ENCODE measurements at regions of chr10 and their contacts with region 1.

Region 1: GRCh38 chr10:101782811-101783735 is at the start of gene NPM3:
- DNase-seq: peak; percentile 59
- ATAC-seq: peak; percentile 74
- H3K4me3 ChIP-seq: peak within 1 kb of the TSS; percentile 74 to 90
- H3K27ac ChIP-seq: peak within 1 kb of the TSS; percentile 66
- H3K4me1 ChIP-seq: peaks cover 19 to 45% of the 10 kb centered on the region in 2 experiments
- H3K27me3 ChIP-seq: no peaks in the 10 kb centered on the region
- CTCF ChIP-seq: no peak
- POLR2A ChIP-seq: peak; percentile 65
- RAD21 ChIP-seq: no peak
- total RNA-seq, gene NPM3: 267 TPM

Region 2: GRCh38 chr10:101161494-101162299 is 621.4 kb before region 1 on chr10:
- CTCF ChIA-PET with region 1: interaction called, 5 read pairs
- POLR2A ChIA-PET with region 1: no interaction called
- RAD21 ChIA-PET with region 1: no interaction called
- intact Hi-C with region 1: loop called (anchors 1 kb)
- DNase-seq: peak; percentile 72
- ATAC-seq: peak; percentile 95
- H3K4me3 ChIP-seq: peak overlapping the region; percentile 38 to 47
- H3K27ac ChIP-seq: no peak overlapping the region
- H3K4me1 ChIP-seq: peaks cover 4 to 15% of the 10 kb centered on the region in 2 experiments; a peak in 3 of 4 replicates
- H3K27me3 ChIP-seq: no peaks in the 10 kb centered on the region
- CTCF ChIP-seq: peak; percentile 95 to 100 (median 99)
- POLR2A ChIP-seq: no peak
- RAD21 ChIP-seq: peak; percentile 99

Region 3: GRCh38 chr10:101458869-101459268 is 324.2 kb before region 1 on chr10:
- CTCF ChIA-PET with region 1: no interaction called
- POLR2A ChIA-PET with region 1: no interaction called
- RAD21 ChIA-PET with region 1: no interaction called
- intact Hi-C with region 1: no loop called
- DNase-seq: no peak
- ATAC-seq: no peak
- H3K4me3 ChIP-seq: no peak overlapping the region
- H3K27ac ChIP-seq: no peak overlapping the region
- H3K4me1 ChIP-seq: no peaks in the 10 kb centered on the region
- H3K27me3 ChIP-seq: no peaks in the 10 kb centered on the region
- CTCF ChIP-seq: no peak
- POLR2A ChIP-seq: no peak
- RAD21 ChIP-seq: no peak

Region 4: GRCh38 chr10:101587725-101588653 is 195.1 kb before region 1 on chr10 and contains the starts of genes DPCD and POLL:
- CTCF ChIA-PET with region 1: interaction called, 3 read pairs
- POLR2A ChIA-PET with region 1: no interaction called
- RAD21 ChIA-PET with region 1: no interaction called
- intact Hi-C with region 1: loop called (anchors 5 kb)
- DNase-seq: peak; percentile 91
- ATAC-seq: peak; percentile 92
- H3K4me3 ChIP-seq: peak within 1 kb of the TSS; percentile 89 to 94
- H3K27ac ChIP-seq: peak within 1 kb of the TSS; percentile 63
- H3K4me1 ChIP-seq: peaks cover 10 to 16% of the 10 kb centered on the region in 2 experiments; a peak in 3 of 4 replicates
- H3K27me3 ChIP-seq: no peaks in the 10 kb centered on the region
- CTCF ChIP-seq: no peak
- POLR2A ChIP-seq: peak; percentile 75
- RAD21 ChIP-seq: no peak
- total RNA-seq, gene DPCD: 39.5 TPM
- total RNA-seq, gene POLL: 51.3 TPM

Region 5: GRCh38 chr10:101602761-101603398 is 180.2 kb before region 1 on chr10:
- CTCF ChIA-PET with region 1: interaction called, 220 read pairs
- POLR2A ChIA-PET with region 1: interaction called, 10 read pairs
- RAD21 ChIA-PET with region 1: interaction called, 15 to 21 read pairs
- intact Hi-C with region 1: loop called (anchors 1 kb)
- DNase-seq: peak; percentile 71
- ATAC-seq: peak; percentile 99
- H3K4me3 ChIP-seq: no peak overlapping the region
- H3K27ac ChIP-seq: no peak overlapping the region
- H3K4me1 ChIP-seq: no peaks in the 10 kb centered on the region
- H3K27me3 ChIP-seq: no peaks in the 10 kb centered on the region
- CTCF ChIP-seq: peak; percentile 97 to 99 (median 99)
- POLR2A ChIP-seq: no peak
- RAD21 ChIP-seq: peak; percentile 96

Region 6: DNA sequence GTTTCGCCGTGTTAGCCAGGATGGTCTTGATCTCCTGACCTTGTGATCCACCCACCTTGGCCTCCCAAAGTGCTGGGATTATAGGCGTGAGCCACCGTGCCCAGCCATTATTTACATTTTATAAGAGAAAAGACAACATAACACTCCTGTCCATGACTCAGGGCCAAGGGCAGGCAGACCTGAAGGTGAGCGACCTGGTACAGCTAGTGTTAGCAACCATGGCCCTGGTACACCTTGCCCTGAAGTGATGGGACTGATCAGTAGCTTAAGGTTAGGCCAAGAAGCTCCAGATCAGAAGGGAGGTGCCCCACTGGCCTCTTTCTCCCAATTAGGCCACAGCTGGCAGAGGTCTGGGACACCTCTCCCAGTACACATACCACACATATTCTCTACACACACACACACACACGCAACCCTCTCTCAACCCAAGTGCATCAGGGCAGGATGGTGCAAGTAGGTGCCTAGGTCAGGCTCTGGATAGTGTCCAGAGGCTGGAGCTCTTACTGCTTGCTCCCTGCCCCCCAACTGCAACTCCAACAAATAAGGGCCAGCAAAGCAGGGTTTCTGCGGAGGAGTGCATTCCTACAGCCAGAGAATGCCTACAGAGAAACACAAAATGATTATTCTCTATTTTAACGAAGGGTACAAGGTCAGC is 151.1 kb before region 1 on chr10:
- CTCF ChIA-PET with region 1: no interaction called
- POLR2A ChIA-PET with region 1: no interaction called
- RAD21 ChIA-PET with region 1: no interaction called
- intact Hi-C with region 1: no loop called
- DNase-seq: no peak
- ATAC-seq: no peak
- H3K4me3 ChIP-seq: no peak overlapping the region
- H3K27ac ChIP-seq: no peak overlapping the region
- H3K4me1 ChIP-seq: no peaks in the 10 kb centered on the region
- H3K27me3 ChIP-seq: no peaks in the 10 kb centered on the region
- CTCF ChIP-seq: no peak
- POLR2A ChIP-seq: no peak
- RAD21 ChIP-seq: no peak

Region 7: GRCh38 chr10:101797403-101798059 is 14.5 kb after region 1 on chr10:
- CTCF ChIA-PET with region 1: interaction called, 17 read pairs
- POLR2A ChIA-PET with region 1: interaction called, 6 read pairs
- RAD21 ChIA-PET with region 1: no interaction called
- intact Hi-C with region 1: no loop called
- DNase-seq: no peak
- ATAC-seq: no peak
- H3K4me3 ChIP-seq: no peak overlapping the region
- H3K27ac ChIP-seq: no peak overlapping the region
- H3K4me1 ChIP-seq: no peaks in the 10 kb centered on the region
- H3K27me3 ChIP-seq: no peaks in the 10 kb centered on the region
- CTCF ChIP-seq: no peak
- POLR2A ChIP-seq: no peak
- RAD21 ChIP-seq: no peak

Region 8: GRCh38 chr10:101818119-101818871 is 35.2 kb after region 1 on chr10 and contains the start of gene OGA:
- CTCF ChIA-PET with region 1: interaction called, 7 read pairs
- POLR2A ChIA-PET with region 1: interaction called, 7 read pairs
- RAD21 ChIA-PET with region 1: interaction called in 1 of 2 experiments, 3 read pairs
- intact Hi-C with region 1: loop called (anchors 5 kb)
- DNase-seq: peak; percentile 100
- ATAC-seq: peak; percentile 91
- H3K4me3 ChIP-seq: peak within 1 kb of the TSS; percentile 87 to 96
- H3K27ac ChIP-seq: peak within 1 kb of the TSS; percentile 81
- H3K4me1 ChIP-seq: peaks cover 18 to 31% of the 10 kb centered on the region in 2 experiments
- H3K27me3 ChIP-seq: no peaks in the 10 kb centered on the region
- CTCF ChIP-seq: no peak
- POLR2A ChIP-seq: peak; percentile 90
- RAD21 ChIP-seq: no peak
- total RNA-seq, gene OGA: 127 TPM

Region 9: DNA sequence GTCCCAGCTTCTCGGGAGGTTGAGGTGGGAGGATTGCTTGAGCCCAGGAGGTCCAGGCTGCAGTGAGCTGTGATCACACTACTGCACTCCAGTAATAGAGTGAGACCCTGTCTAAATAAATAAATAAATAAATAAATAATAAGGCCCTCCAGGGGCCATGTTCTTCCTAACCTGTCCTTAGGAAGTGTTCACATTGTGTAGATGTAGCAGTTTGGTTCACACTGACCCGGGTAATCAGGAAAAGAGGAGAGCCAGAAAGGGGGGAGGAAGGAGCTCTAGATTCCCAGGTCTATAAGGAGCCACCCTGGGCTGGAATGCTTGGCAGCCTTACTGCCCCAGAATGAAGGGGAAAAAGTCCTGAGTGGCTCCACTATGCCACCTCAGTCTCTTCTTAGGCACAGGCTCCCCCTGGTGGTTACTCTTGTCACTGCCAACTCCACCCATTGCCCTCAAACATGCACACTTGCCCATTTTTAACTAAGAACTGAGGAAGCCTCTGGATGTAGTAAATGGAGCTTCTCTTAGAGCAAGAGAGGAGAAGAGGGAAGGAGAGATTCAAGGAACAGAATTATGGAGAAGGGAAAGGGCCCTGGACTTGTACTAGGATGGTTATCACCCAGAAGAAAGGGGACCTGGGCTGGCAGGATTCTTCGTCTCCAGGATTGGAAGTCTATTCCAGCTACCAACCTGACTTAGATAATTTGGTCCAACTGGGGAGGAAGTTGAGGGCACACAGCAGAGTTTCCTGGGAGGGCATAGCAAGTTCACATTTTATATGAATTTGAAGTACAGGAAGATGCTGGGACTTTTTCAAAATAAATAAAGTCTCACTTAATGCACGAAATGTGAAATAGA is 289.8 kb after region 1 on chr10:
- CTCF ChIA-PET with region 1: interaction called, 12 read pairs
- POLR2A ChIA-PET with region 1: no interaction called
- RAD21 ChIA-PET with region 1: no interaction called
- intact Hi-C with region 1: loop called (anchors 2 kb)
- DNase-seq: peak; percentile 87
- ATAC-seq: peak; percentile 96
- H3K4me3 ChIP-seq: no peak overlapping the region
- H3K27ac ChIP-seq: no peak overlapping the region
- H3K4me1 ChIP-seq: peaks cover 5 to 6% of the 10 kb centered on the region in 2 experiments; a peak in 2 of 4 replicates
- H3K27me3 ChIP-seq: peaks cover under 1% of the 10 kb centered on the region; the same call in 1 of the 2 replicates
- CTCF ChIP-seq: peak in 2 of 3 experiments; percentile 100; a peak in 4 of 6 replicates
- POLR2A ChIP-seq: no peak
- RAD21 ChIP-seq: no peak

Region 10: DNA sequence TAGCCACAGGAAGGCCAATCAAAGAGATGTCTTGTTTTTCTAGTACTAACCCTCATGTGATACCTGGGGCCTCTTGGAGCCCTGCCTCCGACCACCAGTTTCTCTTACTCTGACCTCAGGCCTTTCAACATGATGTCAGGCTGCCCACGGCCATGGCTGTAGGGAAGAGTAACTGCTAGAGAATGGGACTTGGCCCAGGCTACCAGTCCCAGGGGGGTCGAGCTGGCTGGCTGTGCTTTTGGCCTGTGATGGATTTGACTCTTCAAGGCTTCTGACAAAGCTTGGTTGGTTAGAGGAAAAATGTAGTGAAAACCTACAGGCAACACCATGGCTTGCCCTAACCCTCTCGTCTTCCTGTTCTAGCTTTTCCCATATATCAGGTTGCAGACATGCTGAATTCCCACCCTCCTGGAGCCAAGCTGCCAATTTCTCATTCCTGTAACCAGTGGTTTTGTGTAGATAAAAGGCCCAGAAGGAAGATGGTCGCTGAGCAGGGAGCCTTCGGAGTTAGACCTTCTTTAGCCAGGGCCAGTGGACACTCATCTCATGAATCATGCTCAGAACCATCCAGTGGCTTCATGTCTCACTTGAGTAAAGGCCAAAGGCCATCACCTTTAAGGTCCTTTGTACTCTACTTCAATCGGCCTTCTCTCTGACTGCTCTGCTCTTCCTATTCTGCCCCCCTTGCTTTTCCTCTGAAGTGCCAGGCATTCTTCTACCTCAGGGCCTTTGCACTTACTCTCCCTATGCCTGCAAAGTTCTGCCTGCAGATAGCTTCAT is 740.4 kb after region 1 on chr10:
- CTCF ChIA-PET with region 1: no interaction called
- POLR2A ChIA-PET with region 1: no interaction called
- RAD21 ChIA-PET with region 1: no interaction called
- intact Hi-C with region 1: no loop called
- DNase-seq: no peak
- ATAC-seq: peak; percentile 14; the same call in 1 of the 2 replicates
- H3K4me3 ChIP-seq: no peak overlapping the region
- H3K27ac ChIP-seq: no peak overlapping the region
- H3K4me1 ChIP-seq: peaks cover 0 to 8% of the 10 kb centered on the region in 2 experiments; a peak in 1 of 4 replicates
- H3K27me3 ChIP-seq: no peaks in the 10 kb centered on the region
- CTCF ChIP-seq: no peak
- POLR2A ChIP-seq: no peak
- RAD21 ChIP-seq: no peak

Measured in HCT116 (cell line).